Prostate gland (tissue), 2 donors: ENCODE measurements at regions of chr3 and their contacts with region 1.

Region 1: GRCh38 chr3:124084022-124084881 is 92.3 kb upstream of the ROPN1 start:
- DNase-seq: no peak
- H3K4me3 ChIP-seq: no peak overlapping the region
- H3K27ac ChIP-seq: no peak overlapping the region
- H3K4me1 ChIP-seq: no peaks in the 10 kb centered on the region
- H3K27me3 ChIP-seq: no peaks in the 10 kb centered on the region
- CTCF ChIP-seq: no peak
- POLR2A ChIP-seq: no peak

Region 2: GRCh38 chr3:123449102-123449996 is 634.9 kb before region 1 on chr3:
- intact Hi-C with region 1: no loop called
- DNase-seq: no peak
- H3K4me3 ChIP-seq: peak overlapping the region; percentile 53 to 55
- H3K27ac ChIP-seq: peak overlapping the region; percentile 75 to 80
- H3K4me1 ChIP-seq: no peaks in the 10 kb centered on the region
- H3K27me3 ChIP-seq: no peaks in the 10 kb centered on the region
- CTCF ChIP-seq: no peak
- POLR2A ChIP-seq: no peak

Region 3: DNA sequence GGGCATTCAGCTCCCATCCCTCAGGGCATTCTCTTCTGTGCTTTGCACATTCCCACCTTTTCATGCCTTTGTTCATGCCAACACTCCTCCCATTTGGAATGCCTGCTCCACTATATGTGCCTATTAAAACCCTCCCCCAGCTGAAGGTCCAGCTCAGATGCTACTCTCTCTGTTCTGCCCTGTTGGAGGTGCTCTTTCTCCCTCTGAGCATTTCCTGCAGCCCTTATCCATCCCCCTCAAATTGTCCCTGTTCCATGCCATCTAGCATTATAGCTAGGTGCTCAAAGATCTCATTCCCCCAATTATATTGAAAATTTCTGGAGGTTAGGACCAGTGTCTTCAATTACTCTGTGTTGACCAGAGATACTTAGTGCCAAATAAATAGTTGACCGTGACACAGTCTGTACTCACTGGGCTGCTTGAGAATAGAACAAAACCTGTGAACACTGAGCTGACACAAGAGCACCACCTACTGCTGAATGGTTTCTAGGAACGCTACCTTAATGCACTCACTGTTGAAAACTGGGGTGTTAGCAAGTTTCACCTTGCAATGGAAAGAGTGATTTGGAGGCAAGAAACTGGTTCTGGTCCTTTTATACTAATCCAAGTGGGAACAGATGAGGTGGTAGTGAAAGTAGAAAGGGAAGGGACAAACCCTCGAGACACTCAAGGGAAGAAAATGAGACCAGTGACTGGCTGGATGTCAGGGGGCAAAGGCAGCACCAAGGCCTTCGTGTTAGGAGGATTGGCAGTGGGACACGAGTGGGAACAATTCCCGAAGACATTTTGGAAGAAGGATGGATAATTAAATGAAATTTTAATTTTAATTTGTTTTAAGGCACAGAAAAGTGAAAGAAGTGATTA is 197.4 kb after region 1 on chr3:
- intact Hi-C with region 1: loop called (anchors 5 kb)
- DNase-seq: no peak
- H3K4me3 ChIP-seq: no peak overlapping the region
- H3K27ac ChIP-seq: no peak overlapping the region
- H3K4me1 ChIP-seq: no peaks in the 10 kb centered on the region
- H3K27me3 ChIP-seq: no peaks in the 10 kb centered on the region
- CTCF ChIP-seq: peak in 2 of 4 experiments; percentile 41 to 43
- POLR2A ChIP-seq: no peak